Right cardiac atrium (tissue), 5 donors: ENCODE measurements at regions of chr1 and their contacts with region 1.

Region 1: DNA sequence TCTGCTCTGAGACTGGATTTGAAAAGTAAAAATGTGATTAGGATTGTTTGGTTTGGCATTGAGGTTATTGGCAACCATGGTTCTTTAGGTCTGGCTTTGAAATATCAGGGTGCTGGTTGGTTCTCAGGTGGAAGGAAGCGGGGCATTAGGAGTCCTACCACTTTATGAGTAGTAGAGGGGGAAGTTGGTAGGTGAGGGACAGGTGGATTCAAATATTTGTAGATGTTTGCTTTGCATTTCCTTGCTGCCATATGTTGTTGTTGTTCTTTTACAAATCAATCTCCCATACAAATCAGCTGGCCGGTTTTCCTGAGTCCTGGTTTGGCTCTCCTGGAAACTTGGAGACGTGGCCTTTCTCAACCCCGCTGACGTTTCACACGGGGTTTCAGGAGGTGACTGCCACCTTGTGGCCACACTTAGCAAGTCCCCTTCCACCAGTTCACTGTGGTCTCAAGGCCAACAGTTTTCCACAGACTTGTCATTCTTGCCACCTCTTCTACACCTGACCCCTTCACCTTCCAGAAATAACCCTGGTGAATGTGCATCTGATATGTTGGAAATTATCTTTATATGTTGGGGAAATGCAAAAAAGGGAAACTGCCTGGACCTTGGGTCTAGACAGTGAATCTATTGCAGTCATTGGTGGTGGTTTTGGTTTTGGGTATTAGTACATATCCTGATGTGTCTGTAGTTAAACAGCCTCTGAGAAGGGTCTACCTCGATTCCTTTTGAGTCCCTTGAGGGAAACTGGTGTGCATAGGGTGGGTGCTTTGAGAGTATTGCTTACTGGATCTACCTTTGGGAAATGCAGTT is 127.0 kb upstream of the KIAA0040 start:
- DNase-seq: peak; percentile 84 to 91 (median 84)
- ATAC-seq: peak; percentile 84 to 91
- H3K4me3 ChIP-seq: no peak overlapping the region
- H3K27ac ChIP-seq: no peak overlapping the region
- H3K4me1 ChIP-seq: peaks cover 2% of the 10 kb centered on the region
- H3K27me3 ChIP-seq: no peaks in the 10 kb centered on the region

Region 2: DNA sequence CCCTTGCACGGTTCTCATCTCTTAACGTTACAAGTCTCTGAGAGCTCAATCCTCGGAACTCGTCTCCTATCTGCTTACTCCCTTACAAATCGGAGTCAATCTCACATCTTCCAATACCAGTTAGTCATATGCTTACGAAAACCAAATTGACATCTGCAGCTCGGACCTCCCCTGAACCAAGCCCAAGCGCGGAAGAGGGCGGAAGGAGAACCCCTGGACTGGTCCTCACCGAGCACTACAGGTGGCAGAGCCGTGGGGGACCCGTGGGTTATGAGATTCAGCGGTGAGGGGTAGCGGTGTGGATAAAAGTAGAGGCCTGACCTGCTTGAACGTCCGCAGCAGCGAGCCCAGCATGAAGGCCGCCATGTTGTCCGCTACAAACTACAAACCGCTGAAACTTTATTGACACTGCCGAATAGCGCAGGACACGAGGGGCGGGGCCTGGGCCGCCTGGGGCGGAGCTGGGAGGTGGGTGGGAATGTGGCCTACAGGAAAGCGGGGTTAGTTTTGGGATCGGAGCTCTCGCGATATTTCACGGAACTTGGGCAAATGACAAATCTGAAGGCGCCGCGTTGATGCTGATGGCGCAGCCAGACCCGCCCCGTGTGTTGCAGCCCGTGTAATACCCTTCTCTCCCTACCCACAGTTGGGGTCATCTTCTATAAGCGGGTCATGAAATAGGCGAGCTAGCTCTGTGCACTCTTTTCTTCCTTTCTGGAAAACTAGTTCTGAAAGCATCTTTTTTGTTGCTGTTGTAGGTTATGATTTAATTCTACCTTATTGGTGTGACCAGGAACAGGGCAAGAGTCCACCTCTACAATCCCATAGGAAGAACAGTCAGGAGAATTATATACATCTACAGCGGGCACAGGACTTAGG is 296.3 kb before region 1 on chr1 and contains the start of gene MRPS14:
- intact Hi-C with region 1: loop called in 1 of 4 experiments (anchors 10 kb)
- DNase-seq: peak; percentile 97 to 99 (median 99)
- ATAC-seq: peak; percentile 99
- H3K4me3 ChIP-seq: peak within 1 kb of the TSS; percentile 93
- H3K27ac ChIP-seq: peak within 1 kb of the TSS; percentile 78
- H3K4me1 ChIP-seq: no peaks in the 10 kb centered on the region
- H3K27me3 ChIP-seq: no peaks in the 10 kb centered on the region
- total RNA-seq, gene MRPS14: 23.8 to 30.0 (median 26.7) TPM

Region 3: GRCh38 chr1:175035865-175036264 is 283.8 kb before region 1 on chr1:
- intact Hi-C with region 1: loop called in 2 of 4 experiments (anchors 5 to 10 kb)
- DNase-seq: no peak
- ATAC-seq: no peak
- H3K4me3 ChIP-seq: no peak overlapping the region
- H3K27ac ChIP-seq: no peak overlapping the region
- H3K4me1 ChIP-seq: no peaks in the 10 kb centered on the region
- H3K27me3 ChIP-seq: no peaks in the 10 kb centered on the region

Region 4: GRCh38 chr1:175154629-175155472 is 164.8 kb before region 1 on chr1:
- intact Hi-C with region 1: loop called (anchors 1 to 2 kb)
- DNase-seq: peak; percentile 67 to 88 (median 82)
- ATAC-seq: peak; percentile 46 to 65
- H3K4me3 ChIP-seq: no peak overlapping the region
- H3K27ac ChIP-seq: no peak overlapping the region
- H3K4me1 ChIP-seq: no peaks in the 10 kb centered on the region
- H3K27me3 ChIP-seq: no peaks in the 10 kb centered on the region